Caco-2 (cell line): ENCODE measurements at regions of chr13 and their contacts with region 1.

Region 1: GRCh38 chr13:31199849-31200636 is at the start of gene B3GLCT:
- DNase-seq: peak; percentile 79 to 94
- H3K4me3 ChIP-seq: peak within 1 kb of the TSS; percentile 77
- H3K4me3 Mint-ChIP-seq: peak within 1 kb of the TSS; percentile 77
- H3K27ac Mint-ChIP-seq: peak within 1 kb of the TSS; percentile 63
- H3K4me1 ChIP-seq: peaks cover 6% of the 10 kb centered on the region
- H3K4me1 Mint-ChIP-seq: peaks cover 14% of the 10 kb centered on the region
- H3K27me3 ChIP-seq: no peaks in the 10 kb centered on the region
- H3K27me3 Mint-ChIP-seq: no peaks in the 10 kb centered on the region
- CTCF ChIP-seq: peak; percentile 81 to 91
- total RNA-seq, gene B3GLCT: 4.5 TPM in 2 replicates

Region 2: GRCh38 chr13:30818323-30818960 is 381.6 kb before region 1 on chr13:
- CTCF ChIA-PET with region 1: no interaction called
- POLR2A ChIA-PET with region 1: no interaction called
- intact Hi-C with region 1: no loop called
- DNase-seq: no peak
- H3K4me3 ChIP-seq: no peak overlapping the region
- H3K4me3 Mint-ChIP-seq: no peak overlapping the region
- H3K27ac Mint-ChIP-seq: no peak overlapping the region
- H3K4me1 ChIP-seq: peaks cover 16% of the 10 kb centered on the region
- H3K4me1 Mint-ChIP-seq: peaks cover 17% of the 10 kb centered on the region
- H3K27me3 ChIP-seq: no peaks in the 10 kb centered on the region; the same call in 1 of the 2 replicates
- H3K27me3 Mint-ChIP-seq: no peaks in the 10 kb centered on the region
- CTCF ChIP-seq: no peak

Region 3: DNA sequence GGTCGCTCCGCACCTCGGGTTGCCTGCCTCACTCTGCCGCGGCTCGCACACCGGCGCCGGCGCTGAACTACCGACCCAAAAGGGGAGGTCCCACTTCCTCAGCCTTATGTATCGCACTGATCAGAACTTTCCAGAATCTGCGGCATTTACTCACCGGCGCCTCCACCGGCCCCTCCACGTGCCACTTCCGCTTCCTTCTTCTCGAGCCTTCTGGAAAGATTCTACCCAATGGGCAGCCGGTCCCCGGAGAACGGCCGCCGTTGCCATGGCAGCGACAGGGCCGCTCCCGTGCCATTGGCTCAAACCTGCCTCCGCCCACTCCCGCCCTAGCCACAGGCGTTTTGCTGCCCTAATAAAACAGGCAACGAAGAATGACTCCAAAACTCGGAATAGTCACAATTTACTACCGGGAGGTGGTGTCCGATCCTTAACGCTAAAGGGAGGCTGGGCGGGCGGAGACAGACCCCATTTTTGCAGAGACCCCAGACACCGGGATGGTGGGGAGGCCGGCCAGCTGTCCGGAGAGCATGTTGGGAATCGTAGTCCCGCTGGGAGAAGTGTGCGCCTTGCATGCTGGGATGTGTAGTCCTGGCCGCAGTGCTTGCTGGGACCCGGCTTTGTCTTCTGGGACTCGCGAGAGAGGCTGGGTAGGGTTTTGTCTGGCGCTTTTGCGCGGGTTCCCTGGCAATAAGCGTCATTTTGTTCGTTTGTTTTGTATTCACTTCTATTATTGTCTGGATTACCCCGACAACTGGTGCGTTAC is 38.0 kb before region 1 on chr13 and contains the start of gene HSPH1:
- CTCF ChIA-PET with region 1: interaction called, 7 read pairs
- POLR2A ChIA-PET with region 1: no interaction called
- intact Hi-C with region 1: loop called (anchors 1 kb)
- DNase-seq: peak; percentile 99
- H3K4me3 ChIP-seq: peak within 1 kb of the TSS; percentile 91
- H3K4me3 Mint-ChIP-seq: peak within 1 kb of the TSS; percentile 98
- H3K27ac Mint-ChIP-seq: peak within 1 kb of the TSS; percentile 97
- H3K4me1 ChIP-seq: peaks cover 18% of the 10 kb centered on the region; the same call in 1 of the 2 replicates
- H3K4me1 Mint-ChIP-seq: peaks cover 20% of the 10 kb centered on the region
- H3K27me3 ChIP-seq: no peaks in the 10 kb centered on the region
- H3K27me3 Mint-ChIP-seq: no peaks in the 10 kb centered on the region
- CTCF ChIP-seq: peak; percentile 43 to 45
- total RNA-seq, gene HSPH1: 141 and 151 TPM in 2 replicates

Region 4: GRCh38 chr13:31485651-31486051 is 285.6 kb after region 1 on chr13:
- CTCF ChIA-PET with region 1: no interaction called
- POLR2A ChIA-PET with region 1: no interaction called
- intact Hi-C with region 1: no loop called
- DNase-seq: peak; percentile 35 to 37
- H3K4me3 ChIP-seq: no peak overlapping the region
- H3K4me3 Mint-ChIP-seq: peak overlapping the region; percentile 2
- H3K27ac Mint-ChIP-seq: no peak overlapping the region
- H3K4me1 ChIP-seq: peaks cover 24% of the 10 kb centered on the region
- H3K4me1 Mint-ChIP-seq: peaks cover 19% of the 10 kb centered on the region
- H3K27me3 ChIP-seq: no peaks in the 10 kb centered on the region
- H3K27me3 Mint-ChIP-seq: no peaks in the 10 kb centered on the region
- CTCF ChIP-seq: no peak